ENCODE measurements at regions of chr15 and their contacts with region 1.

Region 1: DNA sequence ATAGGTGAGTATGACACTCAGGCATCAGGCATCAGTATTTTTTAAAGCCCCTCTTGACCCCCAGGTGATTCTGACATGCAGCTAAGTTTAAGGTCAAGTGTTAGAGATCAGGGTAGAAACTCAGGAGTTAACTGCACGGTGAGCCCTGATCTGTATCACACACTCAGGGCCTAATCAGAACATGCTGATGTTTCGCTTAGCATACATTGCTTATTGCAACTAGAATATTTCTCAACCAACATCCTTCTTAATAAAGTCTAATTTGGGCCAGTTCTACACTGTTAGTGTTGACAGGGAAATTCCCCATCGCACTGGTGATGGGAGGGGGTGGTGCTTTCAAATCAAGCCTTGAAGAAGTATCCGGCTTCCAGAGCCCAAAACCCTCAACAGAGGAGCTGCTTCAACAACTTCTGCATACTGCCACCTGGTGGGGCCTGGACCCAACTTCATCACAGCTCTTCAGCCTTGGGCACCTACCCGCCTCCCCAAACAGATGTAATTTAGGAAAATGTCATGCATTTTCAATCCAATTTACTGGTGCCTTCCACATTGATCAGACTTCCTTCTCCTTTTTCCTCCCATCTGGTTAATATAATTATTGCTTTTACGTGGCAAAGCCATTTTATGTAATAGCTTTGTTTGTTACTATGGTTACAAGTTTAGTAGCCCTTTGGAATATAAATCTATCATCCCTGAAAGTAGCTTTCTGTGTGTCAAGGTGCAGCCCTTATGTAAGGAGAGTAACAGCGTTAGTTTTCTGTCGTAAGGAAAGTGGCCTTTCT is 312.2 kb downstream of the RORA start:
- DNase-seq: peak; percentile 83 to 92 (median 90)
- H3K4me3 ChIP-seq: no peak overlapping the region
- H3K27ac ChIP-seq: no peak overlapping the region
- H3K4me1 ChIP-seq: peaks cover 0 to 11% (median 8%) of the 10 kb centered on the region in 4 experiments
- H3K27me3 ChIP-seq: peaks cover 0 to 2% (median 0%) of the 10 kb centered on the region in 5 experiments

Region 2: DNA sequence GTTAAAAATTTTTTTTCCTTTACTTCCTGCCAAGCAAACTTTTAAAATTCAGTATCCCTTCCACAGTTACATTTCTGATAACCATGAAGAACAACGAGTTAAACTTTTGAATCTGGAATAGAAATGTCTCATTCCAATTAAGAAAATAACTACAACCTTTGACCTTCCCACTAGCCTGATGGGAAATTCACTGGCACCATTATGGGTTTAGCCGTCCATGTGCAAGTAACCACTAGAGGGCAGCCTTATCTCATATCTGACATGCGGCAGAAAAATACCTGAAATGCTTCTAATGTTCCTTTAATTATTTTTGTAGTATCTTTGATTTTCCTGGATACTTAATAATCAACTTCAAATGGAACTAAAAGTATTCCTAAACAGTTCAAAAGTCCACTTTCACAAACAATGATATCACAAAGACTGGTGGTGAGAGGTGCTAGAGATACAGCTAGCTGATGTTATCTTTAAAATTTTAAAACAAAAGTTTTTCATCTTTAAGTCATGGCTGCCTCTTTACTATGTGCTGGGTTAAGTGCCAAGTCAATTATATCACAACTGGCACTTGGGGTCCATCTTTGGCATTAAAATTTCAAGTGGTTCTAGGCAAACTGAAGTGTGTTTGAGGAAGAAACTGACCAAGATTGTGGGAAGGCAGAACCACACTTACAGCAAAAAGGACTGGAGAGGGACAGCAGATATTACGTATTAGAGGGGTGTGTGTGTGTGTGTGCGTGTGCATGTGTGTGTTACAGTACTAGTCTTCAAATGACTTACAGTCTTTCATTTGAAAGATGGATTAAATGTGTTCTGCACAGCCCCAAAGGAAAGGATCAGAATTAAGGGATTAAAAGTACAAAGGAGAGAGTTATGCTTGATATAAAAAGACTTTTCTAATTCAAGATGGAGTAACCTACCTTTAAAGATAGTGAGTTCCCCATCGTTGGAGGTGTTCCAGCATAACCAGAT is 330.8 kb before region 1 on chr15:
- CTCF ChIA-PET with region 1: interaction called, 36 read pairs
- POLR2A ChIA-PET with region 1: no interaction called
- DNase-seq: peak; percentile 75 to 82 (median 80)
- H3K4me3 ChIP-seq: no peak overlapping the region
- H3K27ac ChIP-seq: no peak overlapping the region
- H3K4me1 ChIP-seq: peaks cover 0 to 7% (median 4%) of the 10 kb centered on the region in 4 experiments
- H3K27me3 ChIP-seq: peaks cover 12 to 37% (median 22%) of the 10 kb centered on the region in 5 experiments

Region 3: DNA sequence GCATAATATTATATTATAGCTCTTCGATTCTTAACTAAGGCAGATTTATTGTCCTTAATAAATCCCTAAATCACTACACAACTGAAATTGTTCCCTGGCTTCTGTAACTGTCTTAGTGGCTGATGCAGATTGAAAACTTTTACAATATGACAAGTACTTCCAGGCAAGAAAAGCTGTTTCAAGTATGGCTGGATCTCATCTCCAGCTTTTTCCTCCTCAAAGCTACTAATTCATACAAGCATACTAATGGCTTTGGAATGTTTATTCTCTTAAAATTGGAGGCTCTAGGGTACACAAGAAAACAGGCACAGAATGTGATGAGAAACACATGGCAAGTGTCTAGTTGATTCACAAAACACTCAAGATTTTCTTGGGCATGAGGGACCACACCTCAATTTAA is 86.4 kb before region 1 on chr15:
- CTCF ChIA-PET with region 1: no interaction called
- POLR2A ChIA-PET with region 1: no interaction called
- DNase-seq: no peak
- H3K4me3 ChIP-seq: no peak overlapping the region
- H3K27ac ChIP-seq: no peak overlapping the region
- H3K4me1 ChIP-seq: no peaks in the 10 kb centered on the region
- H3K27me3 ChIP-seq: no peaks in the 10 kb centered on the region

Region 4: GRCh38 chr15:60901647-60902046 is 15.2 kb before region 1 on chr15:
- CTCF ChIA-PET with region 1: interaction called, 12 read pairs
- POLR2A ChIA-PET with region 1: no interaction called
- DNase-seq: no peak
- H3K4me3 ChIP-seq: no peak overlapping the region
- H3K27ac ChIP-seq: no peak overlapping the region
- H3K4me1 ChIP-seq: peaks cover 0 to 5% (median 5%) of the 10 kb centered on the region in 4 experiments
- H3K27me3 ChIP-seq: peaks cover 0 to 2% (median 0%) of the 10 kb centered on the region in 5 experiments

Region 5: DNA sequence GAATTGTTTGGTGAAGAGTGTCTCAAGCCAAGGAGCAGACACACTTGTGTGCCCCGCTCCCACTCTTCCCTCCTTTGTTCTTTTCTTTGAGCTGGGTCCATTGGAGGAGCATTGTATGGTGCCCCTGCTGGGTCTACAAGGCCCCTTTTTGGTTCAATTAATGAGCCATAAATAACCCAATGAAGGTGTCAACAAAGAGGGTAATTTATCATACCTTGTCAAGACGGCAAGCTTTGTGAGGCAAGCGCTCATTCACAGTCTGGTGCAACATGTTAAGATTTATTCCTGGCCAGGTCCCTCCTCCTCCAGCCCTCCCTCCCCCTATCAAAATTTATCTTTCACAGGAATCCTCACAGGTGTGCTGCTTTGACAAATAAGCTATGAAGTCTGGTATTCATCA is 12.1 kb after region 1 on chr15:
- CTCF ChIA-PET with region 1: interaction called, 18 read pairs
- POLR2A ChIA-PET with region 1: no interaction called
- DNase-seq: no peak
- H3K4me3 ChIP-seq: no peak overlapping the region
- H3K27ac ChIP-seq: no peak overlapping the region
- H3K4me1 ChIP-seq: peaks cover 0 to 4% (median 0%) of the 10 kb centered on the region in 4 experiments
- H3K27me3 ChIP-seq: peaks cover 0 to 5% (median 0%) of the 10 kb centered on the region in 5 experiments

Region 6: DNA sequence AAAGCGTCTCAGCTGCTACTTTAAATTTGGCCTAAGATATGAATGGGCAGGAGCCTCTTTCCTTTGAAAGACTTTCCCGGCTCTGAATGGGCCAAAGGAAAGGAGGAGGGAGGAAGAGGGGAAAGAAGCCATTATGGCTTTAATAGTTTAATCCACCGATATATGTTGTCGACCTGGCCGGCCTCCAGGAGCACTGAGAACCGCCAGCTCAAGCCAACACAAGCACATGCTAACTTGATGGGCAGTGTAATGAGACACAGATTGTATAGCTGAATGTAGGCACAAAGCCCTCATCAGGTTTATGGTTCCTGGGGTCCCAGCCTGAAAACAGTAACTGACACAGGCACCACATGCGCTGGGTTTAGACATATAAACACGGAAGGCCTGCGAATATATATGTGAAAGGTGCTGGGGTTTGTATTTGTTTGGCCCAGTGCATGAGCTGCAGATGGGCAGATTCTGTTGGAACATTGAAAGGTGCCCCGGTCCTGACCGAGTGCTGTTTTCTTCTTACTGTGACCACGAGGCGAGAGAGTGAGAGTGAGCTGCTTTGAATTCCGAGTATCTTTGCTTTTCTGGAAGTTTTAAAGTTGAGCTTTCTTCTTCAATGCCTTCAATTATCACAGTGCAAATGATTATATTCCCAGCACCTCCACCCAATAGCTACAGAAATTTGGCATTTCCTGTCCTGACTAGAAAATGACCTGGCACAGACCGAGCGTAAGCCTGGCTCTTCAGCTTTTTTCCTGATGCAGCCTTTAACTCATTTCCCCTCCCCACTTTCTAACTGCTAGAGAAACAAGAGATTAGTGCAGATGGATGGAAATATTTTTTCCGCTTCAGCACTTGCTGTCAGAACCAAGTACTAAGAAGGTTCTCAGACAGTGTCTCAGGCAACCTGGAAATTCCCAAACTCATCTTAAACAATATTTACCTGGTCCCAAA is 44.9 kb after region 1 on chr15:
- CTCF ChIA-PET with region 1: no interaction called
- POLR2A ChIA-PET with region 1: no interaction called
- DNase-seq: no peak
- H3K4me3 ChIP-seq: no peak overlapping the region
- H3K27ac ChIP-seq: no peak overlapping the region
- H3K4me1 ChIP-seq: no peaks in the 10 kb centered on the region
- H3K27me3 ChIP-seq: peaks cover 0 to 28% (median 7%) of the 10 kb centered on the region in 5 experiments

Measured in common myeloid progenitor, CD34-positive (primary cell).